Activated CD8-positive, alpha-beta T cell treated with anti-CD3 and anti-CD28 coated beads, Interleukin-2, amount 10 ng/mL, durations not matched to agents 7 days and 5 days (primary cell): ENCODE measurements at regions of chr5 and their contacts with region 1.

Region 1: DNA sequence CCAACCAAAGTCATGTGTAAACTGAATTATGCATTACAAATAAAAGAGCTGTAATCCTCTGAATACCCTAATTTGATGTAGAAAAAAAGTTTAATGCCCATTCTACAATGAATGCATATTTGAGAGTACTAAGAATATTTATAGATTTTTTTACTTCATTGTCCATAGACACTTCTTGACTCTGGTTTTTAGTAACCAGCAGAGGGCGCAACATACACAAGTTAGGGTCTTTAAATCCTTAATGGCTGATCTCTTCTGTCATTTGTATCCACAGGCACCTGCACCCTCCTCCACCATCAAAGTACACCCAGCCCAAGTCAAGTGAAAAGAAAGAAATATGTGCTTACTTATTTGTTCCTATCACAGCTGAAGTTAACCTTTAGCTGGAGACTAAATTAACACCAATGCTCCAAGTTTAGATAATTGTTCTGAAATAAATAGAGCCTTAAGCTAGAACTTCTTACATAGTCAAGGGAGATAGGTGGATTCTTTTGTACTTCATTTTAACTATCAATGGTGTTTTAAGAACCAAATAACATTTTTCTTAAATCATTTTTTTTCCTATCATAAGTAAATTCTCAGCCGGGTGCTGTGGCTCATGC is 524.2 kb upstream of the DAB2 start:
- DNase-seq: peak; percentile 77
- ATAC-seq: peak; percentile 94
- H3K4me3 Mint-ChIP-seq: no peak overlapping the region
- H3K27ac Mint-ChIP-seq: no peak overlapping the region
- H3K4me1 Mint-ChIP-seq: peaks cover 2% of the 10 kb centered on the region
- H3K27me3 Mint-ChIP-seq: peaks cover 2% of the 10 kb centered on the region

Region 2: GRCh38 chr5:39811381-39811780 is 137.6 kb before region 1 on chr5:
- CTCF ChIA-PET with region 1: no interaction called
- POLR2A ChIA-PET with region 1: no interaction called
- DNase-seq: no peak
- ATAC-seq: no peak
- H3K4me3 Mint-ChIP-seq: no peak overlapping the region
- H3K27ac Mint-ChIP-seq: no peak overlapping the region
- H3K4me1 Mint-ChIP-seq: no peaks in the 10 kb centered on the region
- H3K27me3 Mint-ChIP-seq: peaks cover 5% of the 10 kb centered on the region

Region 3: GRCh38 chr5:40688127-40688761 is 739.3 kb after region 1 on chr5:
- CTCF ChIA-PET with region 1: interaction called, 23 read pairs
- POLR2A ChIA-PET with region 1: no interaction called
- DNase-seq: peak; percentile 93
- ATAC-seq: peak; percentile 73
- H3K4me3 Mint-ChIP-seq: peak overlapping the region; percentile 82
- H3K27ac Mint-ChIP-seq: peak overlapping the region; percentile 81
- H3K4me1 Mint-ChIP-seq: peaks cover 64% of the 10 kb centered on the region
- H3K27me3 Mint-ChIP-seq: no peaks in the 10 kb centered on the region

Region 4: DNA sequence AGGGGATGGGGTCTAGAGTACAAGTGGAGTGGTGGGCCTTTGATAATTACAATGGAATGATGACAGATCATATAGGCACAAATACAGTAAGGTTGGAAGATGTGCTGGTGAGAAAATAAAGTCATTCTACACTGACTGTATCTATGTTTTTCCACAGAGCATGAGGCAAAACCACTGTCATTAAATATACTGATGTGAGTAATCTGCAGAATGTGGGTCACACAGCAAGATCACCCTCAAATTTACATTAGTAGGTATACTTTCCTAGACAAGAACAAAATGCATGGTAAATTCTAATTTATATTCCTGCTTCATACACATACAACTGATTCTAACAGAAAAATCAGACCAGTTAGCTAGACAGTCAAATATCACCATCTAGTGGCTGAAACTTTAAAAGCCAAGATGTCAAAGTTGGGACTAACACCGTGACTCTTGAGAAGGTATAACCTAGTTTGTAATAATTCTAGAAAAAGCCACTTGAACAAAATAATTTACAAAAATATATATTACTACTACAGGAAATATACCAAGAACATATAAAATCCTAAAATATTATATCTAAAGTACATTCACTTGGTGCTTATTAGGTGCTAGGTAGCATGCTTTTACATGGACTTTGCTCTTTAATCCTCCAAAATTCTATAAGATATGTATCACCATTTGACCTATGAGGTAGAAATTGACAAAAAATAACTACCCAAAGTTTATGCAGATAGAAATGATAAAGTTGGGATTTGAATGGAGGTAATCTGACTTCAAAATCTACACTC is 787.3 kb after region 1 on chr5:
- CTCF ChIA-PET with region 1: interaction called, 14 read pairs
- POLR2A ChIA-PET with region 1: no interaction called
- DNase-seq: no peak
- ATAC-seq: peak; percentile 72
- H3K4me3 Mint-ChIP-seq: no peak overlapping the region
- H3K27ac Mint-ChIP-seq: no peak overlapping the region
- H3K4me1 Mint-ChIP-seq: peaks cover 26% of the 10 kb centered on the region
- H3K27me3 Mint-ChIP-seq: no peaks in the 10 kb centered on the region